Ascending aorta (tissue), 2 donors: ENCODE measurements at regions of chr3 and their contacts with region 1.

Region 1: GRCh38 chr3:171566803-171567422 is 106.7 kb upstream of the TNIK start:
- DNase-seq: no peak
- H3K4me3 ChIP-seq: no peak overlapping the region
- H3K27ac ChIP-seq: no peak overlapping the region
- H3K4me1 ChIP-seq: no peaks in the 10 kb centered on the region
- H3K27me3 ChIP-seq: no peaks in the 10 kb centered on the region
- CTCF ChIP-seq: peak; percentile 72 to 85 (median 83)

Region 2: GRCh38 chr3:170961616-170962400 is 605.1 kb before region 1 on chr3:
- intact Hi-C with region 1: loop called (anchors 2 kb)
- DNase-seq: no peak
- H3K4me3 ChIP-seq: no peak overlapping the region
- H3K27ac ChIP-seq: no peak overlapping the region
- H3K4me1 ChIP-seq: no peaks in the 10 kb centered on the region
- H3K27me3 ChIP-seq: no peaks in the 10 kb centered on the region
- CTCF ChIP-seq: peak; percentile 31 to 60 (median 43)

Region 3: GRCh38 chr3:171049861-171050444 is 517.0 kb before region 1 on chr3:
- intact Hi-C with region 1: loop called (anchors 1 kb)
- DNase-seq: peak in 1 of 2 donors; percentile 67
- H3K4me3 ChIP-seq: no peak overlapping the region
- H3K27ac ChIP-seq: no peak overlapping the region
- H3K4me1 ChIP-seq: no peaks in the 10 kb centered on the region
- H3K27me3 ChIP-seq: no peaks in the 10 kb centered on the region
- CTCF ChIP-seq: peak; percentile 42 to 70 (median 45)

Region 4: DNA sequence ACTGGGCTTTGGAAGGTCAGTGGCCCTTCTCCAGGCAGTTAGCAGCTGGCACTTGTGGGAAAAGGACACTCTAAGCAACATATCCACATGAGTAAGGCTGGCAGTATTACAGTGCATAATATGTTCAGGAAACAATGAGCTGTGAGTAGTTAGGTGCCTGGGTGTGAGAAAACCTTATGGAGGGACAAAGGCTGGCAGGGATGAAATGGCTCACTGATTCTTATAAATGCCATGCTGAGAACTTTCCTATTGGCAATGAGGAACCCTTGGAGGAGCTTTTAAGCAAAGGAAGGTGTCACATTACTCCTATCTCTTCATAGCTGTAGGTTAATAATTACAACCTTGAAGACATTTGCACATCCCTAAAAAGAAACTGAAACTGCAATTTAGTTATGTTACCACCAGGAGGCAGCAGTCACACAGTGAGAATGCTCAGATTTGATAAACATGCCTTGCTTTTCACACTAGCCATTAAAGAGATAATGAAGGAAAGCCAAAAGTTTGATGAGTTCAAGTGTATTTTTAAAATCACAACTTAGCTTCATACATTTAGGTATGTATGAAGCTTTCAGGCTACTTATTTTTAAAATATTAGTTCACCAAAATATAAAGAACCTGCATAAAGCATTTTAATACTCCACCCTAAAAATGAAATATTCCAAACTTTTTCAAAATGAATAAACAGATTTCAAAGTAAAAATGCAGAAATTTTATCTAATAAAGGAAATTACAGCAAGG is 403.8 kb before region 1 on chr3:
- intact Hi-C with region 1: loop called (anchors 5 kb)
- DNase-seq: no peak
- H3K4me3 ChIP-seq: no peak overlapping the region
- H3K27ac ChIP-seq: no peak overlapping the region
- H3K4me1 ChIP-seq: no peaks in the 10 kb centered on the region
- H3K27me3 ChIP-seq: no peaks in the 10 kb centered on the region
- CTCF ChIP-seq: peak; percentile 26 to 47 (median 46)

Region 5: GRCh38 chr3:171187706-171188290 is 379.1 kb before region 1 on chr3:
- intact Hi-C with region 1: loop called (anchors 10 kb)
- DNase-seq: no peak
- H3K4me3 ChIP-seq: no peak overlapping the region
- H3K27ac ChIP-seq: no peak overlapping the region
- H3K4me1 ChIP-seq: peaks cover 0 to 9% of the 10 kb centered on the region in 2 donors
- H3K27me3 ChIP-seq: no peaks in the 10 kb centered on the region
- CTCF ChIP-seq: peak; percentile 22 to 53 (median 47)